ENCODE measurements at regions of chr7 and their contacts with region 1.

Region 1: DNA sequence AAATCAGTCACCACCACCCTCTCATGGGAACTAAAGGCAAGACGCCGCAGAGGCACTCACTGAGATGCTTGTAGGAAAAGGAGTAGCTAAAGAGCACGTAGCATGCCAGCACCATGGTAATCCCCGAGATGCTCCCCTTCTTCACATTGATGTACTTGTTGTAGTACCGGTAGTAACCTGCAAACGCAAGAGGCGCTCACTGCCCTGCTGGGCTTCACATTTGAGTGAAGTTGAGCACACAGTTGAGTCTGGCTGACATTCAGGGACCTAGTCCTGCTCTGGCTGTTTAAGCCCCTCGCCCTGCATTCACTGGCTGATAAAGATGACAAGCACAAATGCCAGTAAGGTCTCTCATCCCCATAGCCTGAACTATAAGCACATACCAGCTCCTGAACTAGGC is 6.9 kb downstream of the ATP5MF start:
- DNase-seq: peak; percentile 49 to 59
- H3K4me3 ChIP-seq: no peak overlapping the region
- H3K4me3 Mint-ChIP-seq: no peak overlapping the region
- H3K27ac Mint-ChIP-seq: peak overlapping the region; percentile 51
- H3K4me1 ChIP-seq: no peaks in the 10 kb centered on the region
- H3K4me1 Mint-ChIP-seq: peaks cover 16% of the 10 kb centered on the region
- H3K27me3 ChIP-seq: no peaks in the 10 kb centered on the region
- H3K27me3 Mint-ChIP-seq: no peaks in the 10 kb centered on the region
- CTCF ChIP-seq: peak; percentile 37 to 43

Region 2: GRCh38 chr7:99392677-99393354 is 66.3 kb before region 1 on chr7:
- CTCF ChIA-PET with region 1: no interaction called
- POLR2A ChIA-PET with region 1: no interaction called
- intact Hi-C with region 1: no loop called
- DNase-seq: no peak
- H3K4me3 ChIP-seq: no peak overlapping the region
- H3K4me3 Mint-ChIP-seq: no peak overlapping the region
- H3K27ac Mint-ChIP-seq: no peak overlapping the region
- H3K4me1 ChIP-seq: no peaks in the 10 kb centered on the region
- H3K4me1 Mint-ChIP-seq: peaks cover under 1% of the 10 kb centered on the region
- H3K27me3 ChIP-seq: no peaks in the 10 kb centered on the region
- H3K27me3 Mint-ChIP-seq: no peaks in the 10 kb centered on the region
- CTCF ChIP-seq: no peak

Region 3: DNA sequence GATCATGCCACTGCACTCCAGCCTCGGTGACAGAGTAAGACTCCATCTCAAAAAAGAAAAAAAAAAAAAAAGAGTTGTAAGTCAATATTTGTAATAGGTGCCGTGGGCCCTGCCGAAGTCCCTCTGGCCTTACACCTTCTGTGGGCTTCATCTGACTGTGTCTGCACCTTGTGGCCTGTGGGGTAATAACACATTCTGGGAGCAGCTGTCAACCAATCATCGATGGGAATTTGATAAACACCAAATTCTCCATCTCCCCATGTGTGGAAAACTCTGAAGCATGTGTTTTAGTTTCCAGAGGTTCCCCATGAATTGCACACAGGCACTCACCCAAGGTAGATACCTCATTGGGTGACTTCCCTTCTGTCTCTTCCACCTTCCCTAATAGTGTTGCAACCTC is 30.1 kb after region 1 on chr7:
- CTCF ChIA-PET with region 1: interaction called, 10 read pairs
- POLR2A ChIA-PET with region 1: no interaction called
- intact Hi-C with region 1: no loop called
- DNase-seq: peak; percentile 61 to 63
- H3K4me3 ChIP-seq: no peak overlapping the region
- H3K4me3 Mint-ChIP-seq: no peak overlapping the region
- H3K27ac Mint-ChIP-seq: no peak overlapping the region
- H3K4me1 ChIP-seq: no peaks in the 10 kb centered on the region
- H3K4me1 Mint-ChIP-seq: no peaks in the 10 kb centered on the region
- H3K27me3 ChIP-seq: no peaks in the 10 kb centered on the region
- H3K27me3 Mint-ChIP-seq: no peaks in the 10 kb centered on the region
- CTCF ChIP-seq: peak in 1 of 2 experiments; percentile 33

Region 4: DNA sequence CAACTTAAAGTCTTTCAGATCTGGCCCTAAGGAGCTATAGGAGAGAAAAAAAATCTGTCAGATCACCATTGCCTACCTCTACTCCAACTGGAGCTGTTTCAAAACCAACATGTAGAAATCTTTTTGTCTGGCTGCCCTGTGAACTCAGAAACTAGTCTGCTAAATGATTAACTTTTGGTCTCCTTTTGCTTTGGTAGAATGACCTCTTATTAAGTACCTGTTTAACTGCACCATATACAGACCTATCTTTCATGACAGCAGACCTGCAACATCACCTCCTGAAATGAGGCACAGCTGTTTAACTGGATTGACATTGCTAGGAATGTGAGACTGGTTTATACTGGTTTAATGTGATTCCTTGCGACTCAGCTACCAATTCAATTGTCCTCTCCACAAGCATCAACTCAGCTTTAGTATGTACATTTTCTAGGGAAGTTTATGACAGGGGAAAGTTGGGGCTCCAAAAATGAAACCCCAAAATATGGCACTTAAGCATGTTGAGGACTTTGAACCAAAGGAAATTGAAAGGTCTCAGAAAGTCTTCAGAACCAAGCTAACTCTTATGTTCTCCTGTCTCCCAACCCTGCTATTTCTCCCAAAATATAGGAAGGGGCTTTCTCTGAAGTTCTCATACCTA is 370.6 kb after region 1 on chr7:
- CTCF ChIA-PET with region 1: no interaction called
- POLR2A ChIA-PET with region 1: no interaction called
- intact Hi-C with region 1: no loop called
- DNase-seq: peak; percentile 57 to 65
- H3K4me3 ChIP-seq: no peak overlapping the region
- H3K4me3 Mint-ChIP-seq: peak overlapping the region; percentile 11
- H3K27ac Mint-ChIP-seq: peak overlapping the region; percentile 29
- H3K4me1 ChIP-seq: peaks cover 59% of the 10 kb centered on the region
- H3K4me1 Mint-ChIP-seq: peaks cover 53% of the 10 kb centered on the region
- H3K27me3 ChIP-seq: no peaks in the 10 kb centered on the region
- H3K27me3 Mint-ChIP-seq: no peaks in the 10 kb centered on the region
- CTCF ChIP-seq: no peak